Activated CD4-positive, alpha-beta T cell treated with anti-CD3 and anti-CD28 coated beads for 36 hours (primary cell): ENCODE measurements at regions of chr19 and their contacts with region 1.

Region 1: GRCh38 chr19:19145684-19146608 is 7.7 kb upstream of the TMEM161A start:
- DNase-seq: peak; percentile 93
- ATAC-seq: peak; percentile 88
- H3K4me3 Mint-ChIP-seq: no peak overlapping the region
- H3K27ac Mint-ChIP-seq: no peak overlapping the region
- H3K4me1 Mint-ChIP-seq: no peaks in the 10 kb centered on the region
- H3K27me3 Mint-ChIP-seq: no peaks in the 10 kb centered on the region

Region 2: DNA sequence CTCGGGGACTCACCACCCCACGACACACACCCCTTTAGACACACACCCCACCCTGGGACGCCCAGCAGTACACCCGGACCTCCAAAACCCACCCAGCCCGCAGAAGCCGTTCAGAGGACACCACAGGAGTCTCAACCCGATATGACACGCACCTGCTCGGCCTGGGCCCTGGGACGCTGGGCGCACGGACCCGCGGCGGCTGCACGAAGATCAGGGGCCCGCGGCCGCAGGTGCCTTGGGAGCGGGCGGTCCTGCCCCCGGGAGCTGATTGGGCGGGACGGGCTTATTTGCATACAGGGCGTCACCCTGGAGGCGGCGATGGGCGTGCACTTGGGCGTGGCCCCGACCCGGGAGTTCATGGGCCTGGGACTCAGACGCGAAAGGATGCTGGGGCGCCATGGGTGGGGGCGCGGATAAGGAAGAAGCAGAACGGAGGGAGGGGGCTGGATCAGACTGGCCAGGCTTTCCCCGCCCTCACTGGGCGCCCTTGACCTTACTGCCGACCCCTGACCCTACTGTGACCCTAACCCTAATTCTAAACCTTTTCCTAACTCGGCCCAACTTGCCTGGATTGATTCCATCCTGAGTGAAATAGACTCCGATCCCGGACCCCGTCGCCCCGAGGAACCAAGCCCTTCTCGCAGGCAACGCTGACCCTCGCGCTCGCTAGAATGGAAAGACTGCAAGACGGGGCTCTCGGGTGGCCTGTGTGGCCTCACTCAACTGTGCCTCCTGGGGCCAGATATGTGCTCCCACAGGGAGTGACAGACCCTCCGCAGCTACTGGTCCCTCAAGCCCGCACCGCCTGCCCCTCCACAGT is 24.3 kb after region 1 on chr19 and contains the start of gene MEF2B:
- CTCF ChIA-PET with region 1: interaction called, 12 read pairs
- POLR2A ChIA-PET with region 1: no interaction called
- intact Hi-C with region 1: loop called (anchors 1 kb)
- DNase-seq: peak; percentile 90
- ATAC-seq: peak; percentile 93
- H3K4me3 Mint-ChIP-seq: no peak within 1 kb of the TSS
- H3K27ac Mint-ChIP-seq: no peak within 1 kb of the TSS
- H3K4me1 Mint-ChIP-seq: peaks cover 13% of the 10 kb centered on the region
- H3K27me3 Mint-ChIP-seq: no peaks in the 10 kb centered on the region
- total RNA-seq, gene MEF2B: 1.9 to 2.1 TPM